K562 (cell line): ENCODE measurements at regions of chr12 and their contacts with region 1.

Region 1: GRCh38 chr12:106309671-106310505 is 7.4 kb downstream of the TCP11L2 start:
- DNase-seq: no peak
- ATAC-seq: no peak
- H3K4me3 ChIP-seq: no peak overlapping the region
- H3K27ac ChIP-seq: no peak overlapping the region
- H3K4me1 ChIP-seq: 0 out of 5 replicates have a peak, but pooled peaks cover 0 to 6% of the 10 kb centered on the region in 2 experiments
- H3K27me3 ChIP-seq: peaks cover 12% of the 10 kb centered on the region in 2 experiments; a peak in 3 of 5 replicates
- CTCF ChIP-seq: no peak
- EP300 ChIP-seq: no peak
- POLR2A ChIP-seq: no peak
- RAD21 ChIP-seq: no peak

Region 2: GRCh38 chr12:106291342-106291741 is 18.5 kb before region 1 on chr12:
- CTCF ChIA-PET with region 1: no interaction called
- POLR2A ChIA-PET with region 1: no interaction called
- in situ Hi-C with region 1: no loop called
- intact Hi-C with region 1: loop called (anchors 1 kb)
- DNase-seq: no peak
- ATAC-seq: no peak
- H3K4me3 ChIP-seq: no peak overlapping the region
- H3K27ac ChIP-seq: no peak overlapping the region
- H3K4me1 ChIP-seq: peaks cover 0 to 21% of the 10 kb centered on the region in 2 experiments; a peak in 2 of 5 replicates
- H3K27me3 ChIP-seq: no peaks in the 10 kb centered on the region; a peak in 1 of 5 replicates
- CTCF ChIP-seq: no peak
- EP300 ChIP-seq: no peak
- POLR2A ChIP-seq: no peak
- RAD21 ChIP-seq: no peak